GM13976 (cell line): ENCODE measurements at regions of chr17 and their contacts with region 1.

Region 1: GRCh38 chr17:77331301-77331864 is 190.6 kb downstream of the SEC14L1 start:
- DNase-seq: peak; percentile 94
- CTCF ChIP-seq: peak; percentile 91

Region 2: GRCh38 chr17:77061669-77062068 is 269.7 kb before region 1 on chr17:
- in situ Hi-C with region 1: no loop called
- DNase-seq: no peak
- CTCF ChIP-seq: no peak

Region 3: GRCh38 chr17:77287432-77288071 is 43.8 kb before region 1 on chr17:
- in situ Hi-C with region 1: no loop called
- DNase-seq: no peak
- CTCF ChIP-seq: no peak

Region 4: GRCh38 chr17:77429919-77430752 is 98.8 kb after region 1 on chr17:
- in situ Hi-C with region 1: loop called (anchors 10 kb)
- DNase-seq: peak; percentile 87
- CTCF ChIP-seq: peak; percentile 78